PC-9 (cell line): ENCODE measurements at regions of chr12 and their contacts with region 1.

Region 1: DNA sequence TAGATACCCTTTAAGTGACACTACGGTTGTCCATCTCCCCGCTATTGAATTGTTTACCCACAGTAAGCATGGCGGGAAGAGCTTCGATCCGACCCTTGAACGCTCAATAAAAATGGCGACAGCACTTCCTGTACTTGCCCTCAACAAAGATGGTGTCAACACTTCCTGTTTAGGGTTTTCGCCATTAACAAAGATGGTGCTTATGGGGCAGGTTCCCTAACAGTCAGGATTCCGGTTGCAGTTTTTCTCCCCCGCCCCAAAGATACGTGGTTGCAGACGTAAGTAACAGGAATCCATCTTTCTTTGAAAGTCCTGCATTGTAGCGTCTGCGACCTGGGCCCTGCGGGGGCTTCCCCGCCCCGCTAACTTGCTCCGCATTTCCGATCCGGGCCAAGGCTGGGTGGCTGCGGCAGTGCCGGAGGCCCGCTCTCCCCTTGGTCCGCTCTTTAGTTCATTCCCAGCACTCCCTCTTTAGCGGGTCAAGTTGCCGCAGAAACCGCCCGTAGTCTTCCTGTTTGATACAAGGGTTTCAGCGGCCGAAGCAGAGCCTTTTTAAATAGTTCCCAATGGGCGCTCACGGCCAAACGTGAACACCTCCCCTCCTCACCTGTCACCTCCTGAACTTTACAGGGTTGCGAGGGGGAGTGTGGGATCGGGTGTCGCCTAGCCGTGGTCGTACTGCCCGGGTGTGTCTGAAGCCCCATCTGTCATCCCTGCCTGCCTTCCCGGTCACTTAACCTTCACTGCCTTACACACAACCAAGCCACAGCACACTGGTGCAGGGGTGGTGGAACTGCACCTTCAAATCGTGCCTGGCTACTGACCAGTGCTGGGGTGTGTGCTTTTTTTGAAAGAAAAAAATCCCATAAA is at the start of gene CRADD:
- DNase-seq: peak; percentile 63 to 87
- H3K4me3 ChIP-seq: peak within 1 kb of the TSS; percentile 72
- H3K27ac ChIP-seq: peak within 1 kb of the TSS; percentile 87
- H3K4me1 ChIP-seq: peaks cover 8% of the 10 kb centered on the region
- H3K27me3 ChIP-seq: no peaks in the 10 kb centered on the region
- CTCF ChIP-seq: no peak
- total RNA-seq, gene CRADD: 7.6 and 9.3 TPM in 2 replicates

Region 2: GRCh38 chr12:93722835-93723538 is 45.6 kb after region 1 on chr12:
- CTCF ChIA-PET with region 1: no interaction called
- POLR2A ChIA-PET with region 1: no interaction called
- intact Hi-C with region 1: loop called (anchors 5 kb)
- DNase-seq: peak; percentile 78 to 93
- H3K4me3 ChIP-seq: peak overlapping the region; percentile 28; the same call in 1 of the 2 replicates
- H3K27ac ChIP-seq: peak overlapping the region; percentile 49
- H3K4me1 ChIP-seq: peaks cover 17% of the 10 kb centered on the region
- H3K27me3 ChIP-seq: no peaks in the 10 kb centered on the region
- CTCF ChIP-seq: no peak